ENCODE measurements at regions of chr7 and their contacts with region 1.

Region 1: DNA sequence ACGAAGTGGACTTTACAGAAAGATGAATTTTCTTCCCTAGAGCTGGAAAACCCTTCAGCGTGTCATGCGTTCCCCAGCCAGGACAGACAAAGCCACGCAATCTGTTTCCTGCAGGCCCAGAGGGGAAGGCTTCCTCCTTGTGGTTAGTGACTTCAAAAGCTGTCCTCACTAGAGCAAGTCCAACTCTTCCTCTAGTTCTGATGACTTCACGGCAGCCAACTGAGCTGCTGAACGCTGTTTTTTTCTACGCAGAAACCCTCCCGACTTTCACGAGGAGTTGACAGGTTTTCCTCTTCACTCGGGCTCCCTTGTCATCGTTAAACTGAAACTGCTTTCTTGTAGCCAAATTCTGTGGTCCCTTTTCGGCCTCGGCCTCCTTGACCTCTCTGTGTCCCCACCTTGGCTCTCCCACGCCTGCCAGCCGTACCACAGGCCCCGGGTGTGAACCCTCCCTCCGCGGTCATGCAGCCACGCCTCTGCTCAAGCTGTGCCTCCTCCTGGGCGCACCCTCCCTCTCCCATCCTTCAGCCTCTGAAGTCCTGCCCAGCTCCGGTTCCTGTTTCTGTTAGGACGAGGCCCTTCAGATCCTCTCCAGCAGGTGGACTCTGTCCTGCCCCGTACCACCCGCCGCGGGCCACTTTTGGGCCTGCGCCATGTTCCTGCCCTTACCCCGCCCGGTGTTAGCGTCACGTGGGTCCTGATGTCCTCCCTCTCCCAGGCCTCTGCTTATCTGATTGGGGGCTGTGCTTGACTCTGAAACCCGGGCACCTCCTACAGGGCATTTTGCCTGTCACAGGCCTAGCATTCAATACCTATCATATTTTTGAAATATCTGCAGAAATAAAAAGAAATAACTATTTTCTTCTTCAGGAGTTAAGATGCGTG is 39.3 kb downstream of the CUX1 start:
- DNase-seq: peak; percentile 91
- H3K4me3 ChIP-seq: peak overlapping the region; percentile 6 to 17
- H3K27ac ChIP-seq: peak overlapping the region; percentile 84 to 90
- H3K4me1 ChIP-seq: peaks cover 10% of the 10 kb centered on the region
- H3K27me3 ChIP-seq: no peaks in the 10 kb centered on the region
- CTCF ChIP-seq: peak in 3 of 4 experiments; percentile 49 to 85 (median 81)
- POLR2A ChIP-seq: no peak

Region 2: DNA sequence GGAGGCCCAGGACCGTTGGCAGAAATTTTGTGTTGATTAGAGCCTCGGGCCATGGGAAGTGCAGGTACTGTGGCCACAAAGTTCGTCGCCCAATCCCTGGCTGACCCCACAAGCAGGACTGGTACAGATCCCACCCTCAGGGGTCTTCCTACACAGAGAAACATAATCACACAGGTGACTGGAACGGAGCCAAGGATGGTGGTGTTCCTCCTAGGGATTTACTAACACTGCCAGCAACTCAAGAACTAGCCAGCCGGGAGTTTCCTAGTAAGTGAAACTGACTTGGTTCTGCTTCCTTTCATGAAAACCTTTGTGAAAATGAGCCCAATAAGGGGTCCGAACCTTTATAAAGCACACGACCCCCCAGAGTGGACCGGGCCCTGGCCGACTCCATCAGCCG is 33.6 kb before region 1 on chr7:
- intact Hi-C with region 1: loop called (anchors 2 kb)
- DNase-seq: peak; percentile 21
- H3K4me3 ChIP-seq: no peak overlapping the region
- H3K27ac ChIP-seq: peak overlapping the region; percentile 23 to 38
- H3K4me1 ChIP-seq: peaks cover 4% of the 10 kb centered on the region
- H3K27me3 ChIP-seq: no peaks in the 10 kb centered on the region
- CTCF ChIP-seq: no peak
- POLR2A ChIP-seq: no peak

Region 3: DNA sequence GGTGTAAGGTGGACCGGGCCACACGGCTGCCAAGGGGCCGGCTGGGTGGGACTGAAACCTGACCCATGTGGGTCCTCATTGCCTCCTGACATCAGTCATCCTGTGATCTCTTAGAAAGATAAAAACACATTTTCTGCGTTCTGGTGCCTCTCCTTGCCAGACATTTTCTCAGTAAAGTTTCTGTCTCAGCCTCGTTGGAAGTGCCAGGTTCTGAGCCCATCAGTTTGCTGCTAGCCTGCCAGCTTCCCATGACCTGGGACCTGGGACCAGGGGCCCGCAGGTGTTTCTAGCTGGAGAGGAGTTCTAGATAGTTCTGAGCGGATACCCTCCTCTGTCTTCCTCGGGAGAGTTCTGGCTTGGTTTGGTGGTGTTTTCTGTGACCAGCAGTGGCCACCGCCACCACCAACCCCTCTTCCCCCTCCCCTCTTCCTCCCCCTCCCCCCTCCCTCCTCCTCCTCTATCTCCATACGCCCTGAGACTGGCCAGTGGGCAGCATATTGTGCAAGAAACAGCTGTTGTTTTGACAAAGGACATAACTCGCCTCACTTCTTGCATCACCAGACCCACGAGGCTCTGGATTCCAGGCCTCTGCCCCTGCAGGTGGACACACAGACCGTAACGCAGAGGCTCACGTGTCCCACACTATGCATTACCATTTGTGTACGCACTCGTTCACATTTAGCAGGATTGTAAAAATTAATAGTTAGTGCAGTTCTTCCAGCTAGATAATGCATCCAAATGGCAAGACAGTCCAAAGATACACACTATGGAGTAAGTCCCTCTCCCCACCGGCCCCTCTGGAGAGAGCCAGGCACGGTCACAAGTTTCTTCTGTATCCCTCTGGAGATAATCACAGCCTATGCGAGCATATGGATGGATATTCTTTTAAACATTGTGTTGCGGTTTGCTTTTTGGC is 55.3 kb after region 1 on chr7:
- intact Hi-C with region 1: loop called (anchors 5 kb)
- DNase-seq: no peak
- H3K4me3 ChIP-seq: no peak overlapping the region
- H3K27ac ChIP-seq: peak overlapping the region; percentile 38 to 50
- H3K4me1 ChIP-seq: no peaks in the 10 kb centered on the region
- H3K27me3 ChIP-seq: no peaks in the 10 kb centered on the region
- CTCF ChIP-seq: no peak
- POLR2A ChIP-seq: no peak